Natural killer cell (primary cell): ENCODE measurements at regions of chr13 and their contacts with region 1.

Region 1: GRCh38 chr13:99200432-99201167 is at the start of gene UBAC2:
- DNase-seq: peak; percentile 95 to 100
- ATAC-seq: peak; percentile 83 to 93 (median 89)
- H3K4me3 ChIP-seq: peak within 1 kb of the TSS; percentile 97
- H3K4me3 Mint-ChIP-seq: peak within 1 kb of the TSS; percentile 93
- H3K27ac ChIP-seq: peak within 1 kb of the TSS; percentile 99
- H3K27ac Mint-ChIP-seq: peak within 1 kb of the TSS; percentile 92 to 96
- H3K4me1 ChIP-seq: peaks cover 34% of the 10 kb centered on the region
- H3K4me1 Mint-ChIP-seq: peaks cover 53 to 60% of the 10 kb centered on the region in 2 donors
- H3K27me3 ChIP-seq: no peaks in the 10 kb centered on the region
- H3K27me3 Mint-ChIP-seq: no peaks in the 10 kb centered on the region
- CTCF ChIP-seq: no peak
- total RNA-seq, gene UBAC2: 50.6 to 59.1 (median 56.4) TPM

Region 2: GRCh38 chr13:99087096-99087953 is 113.3 kb before region 1 on chr13:
- intact Hi-C with region 1: loop called (anchors 1 kb)
- DNase-seq: peak; percentile 86 to 96
- ATAC-seq: peak; percentile 68 to 84 (median 76)
- H3K4me3 ChIP-seq: peak overlapping the region; percentile 66
- H3K4me3 Mint-ChIP-seq: peak overlapping the region; percentile 98
- H3K27ac ChIP-seq: peak overlapping the region; percentile 87
- H3K27ac Mint-ChIP-seq: peak overlapping the region; percentile 95 to 100
- H3K4me1 ChIP-seq: peaks cover 28% of the 10 kb centered on the region
- H3K4me1 Mint-ChIP-seq: peaks cover 26 to 28% of the 10 kb centered on the region in 2 donors
- H3K27me3 ChIP-seq: no peaks in the 10 kb centered on the region
- H3K27me3 Mint-ChIP-seq: peaks cover 8 to 13% of the 10 kb centered on the region in 2 donors
- CTCF ChIP-seq: peak; percentile 38

Region 3: DNA sequence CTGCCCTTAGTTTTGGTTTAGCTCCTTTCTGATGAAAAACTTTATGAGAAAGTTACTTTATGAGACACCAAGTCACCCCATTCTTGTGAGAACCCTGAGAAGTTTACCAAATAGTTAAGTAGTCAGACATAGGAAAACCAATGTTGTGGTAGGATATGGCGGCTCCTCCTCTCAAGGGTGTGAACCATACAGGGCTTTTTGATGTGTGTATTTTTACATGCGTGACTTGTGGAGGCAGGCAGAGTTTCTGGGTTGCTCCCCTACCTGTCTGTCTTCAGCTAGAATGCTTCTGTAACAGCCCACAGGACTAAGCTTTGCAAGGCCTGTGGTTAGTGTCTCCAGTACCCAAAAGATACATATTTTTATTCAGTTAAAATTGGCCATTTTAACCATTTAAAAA is 18.4 kb after region 1 on chr13:
- intact Hi-C with region 1: loop called (anchors 1 kb)
- DNase-seq: peak; percentile 52 to 90
- ATAC-seq: peak; percentile 70 to 83 (median 81)
- H3K4me3 ChIP-seq: no peak overlapping the region
- H3K4me3 Mint-ChIP-seq: peak overlapping the region; percentile 86
- H3K27ac ChIP-seq: peak overlapping the region; percentile 74
- H3K27ac Mint-ChIP-seq: peak overlapping the region; percentile 83 to 89
- H3K4me1 ChIP-seq: peaks cover 64% of the 10 kb centered on the region
- H3K4me1 Mint-ChIP-seq: peaks cover 86% of the 10 kb centered on the region in 2 donors
- H3K27me3 ChIP-seq: no peaks in the 10 kb centered on the region
- H3K27me3 Mint-ChIP-seq: no peaks in the 10 kb centered on the region
- CTCF ChIP-seq: no peak

Region 4: GRCh38 chr13:99258210-99258860 is 57.7 kb after region 1 on chr13 and contains the start of gene GPR18:
- intact Hi-C with region 1: loop called (anchors 1 kb)
- DNase-seq: peak in 1 of 2 donors; percentile 75
- ATAC-seq: peak; percentile 79 to 89 (median 88)
- H3K4me3 ChIP-seq: peak within 1 kb of the TSS; percentile 78
- H3K4me3 Mint-ChIP-seq: peak within 1 kb of the TSS; percentile 93
- H3K27ac ChIP-seq: peak within 1 kb of the TSS; percentile 91
- H3K27ac Mint-ChIP-seq: peak within 1 kb of the TSS; percentile 87 to 97
- H3K4me1 ChIP-seq: peaks cover 18% of the 10 kb centered on the region
- H3K4me1 Mint-ChIP-seq: peaks cover 48 to 64% of the 10 kb centered on the region in 2 donors
- H3K27me3 ChIP-seq: no peaks in the 10 kb centered on the region
- H3K27me3 Mint-ChIP-seq: no peaks in the 10 kb centered on the region
- CTCF ChIP-seq: no peak
- total RNA-seq, gene GPR18: 11.4 to 41.7 (median 25.5) TPM

Region 5: GRCh38 chr13:99501184-99501847 is 300.7 kb after region 1 on chr13 and contains the start of gene TM9SF2:
- intact Hi-C with region 1: loop called (anchors 2 kb)
- DNase-seq: peak; percentile 97 to 99
- ATAC-seq: peak; percentile 61 to 78 (median 74)
- H3K4me3 ChIP-seq: peak within 1 kb of the TSS; percentile 88
- H3K4me3 Mint-ChIP-seq: peak within 1 kb of the TSS; percentile 96
- H3K27ac ChIP-seq: peak within 1 kb of the TSS; percentile 89
- H3K27ac Mint-ChIP-seq: peak within 1 kb of the TSS; percentile 94 to 98
- H3K4me1 ChIP-seq: peaks cover 45% of the 10 kb centered on the region
- H3K4me1 Mint-ChIP-seq: peaks cover 81 to 83% of the 10 kb centered on the region in 2 donors
- H3K27me3 ChIP-seq: no peaks in the 10 kb centered on the region
- H3K27me3 Mint-ChIP-seq: no peaks in the 10 kb centered on the region
- CTCF ChIP-seq: no peak
- total RNA-seq, gene TM9SF2: 41.8 to 62.1 (median 51.4) TPM